Activated CD8-positive, alpha-beta T cell treated with anti-CD3 and anti-CD28 coated beads, Interleukin-2, amount 10 ng/mL, durations not matched to agents 7 days and 5 days (primary cell): ENCODE measurements at regions of chr15 and their contacts with region 1.

Region 1: DNA sequence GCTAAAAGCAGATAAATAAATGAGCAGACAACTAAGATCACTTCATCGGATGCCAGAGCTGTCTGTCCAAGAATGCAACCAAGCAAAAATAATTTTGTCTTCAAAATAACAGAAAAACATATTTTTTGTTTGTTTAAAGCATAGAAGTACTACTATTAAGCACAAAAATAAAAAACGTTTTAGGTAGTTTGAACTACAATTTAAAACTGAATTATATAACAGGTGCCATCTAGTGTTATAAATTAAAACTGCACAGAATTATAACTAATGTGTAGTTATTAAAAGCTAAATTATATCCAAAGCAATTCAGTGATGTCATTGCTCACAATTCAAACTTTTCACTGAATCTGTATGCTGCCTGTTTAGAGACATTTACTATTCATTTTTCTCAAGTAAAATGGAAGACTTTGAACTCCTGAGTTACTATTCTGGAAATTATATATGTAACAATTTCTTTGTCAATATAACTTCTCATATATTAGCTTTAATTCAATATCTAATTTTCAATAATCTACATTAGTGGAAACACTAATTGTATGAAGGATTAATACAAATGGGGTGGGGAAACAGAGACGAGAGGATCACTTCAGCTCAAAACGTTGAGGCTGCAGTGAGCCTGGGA is 29.5 kb downstream of the LINS1 start:
- DNase-seq: no peak
- ATAC-seq: no peak
- H3K4me3 Mint-ChIP-seq: peak overlapping the region; percentile 53
- H3K27ac Mint-ChIP-seq: peak overlapping the region; percentile 82
- H3K4me1 Mint-ChIP-seq: peaks cover 39% of the 10 kb centered on the region
- H3K27me3 Mint-ChIP-seq: no peaks in the 10 kb centered on the region

Region 2: DNA sequence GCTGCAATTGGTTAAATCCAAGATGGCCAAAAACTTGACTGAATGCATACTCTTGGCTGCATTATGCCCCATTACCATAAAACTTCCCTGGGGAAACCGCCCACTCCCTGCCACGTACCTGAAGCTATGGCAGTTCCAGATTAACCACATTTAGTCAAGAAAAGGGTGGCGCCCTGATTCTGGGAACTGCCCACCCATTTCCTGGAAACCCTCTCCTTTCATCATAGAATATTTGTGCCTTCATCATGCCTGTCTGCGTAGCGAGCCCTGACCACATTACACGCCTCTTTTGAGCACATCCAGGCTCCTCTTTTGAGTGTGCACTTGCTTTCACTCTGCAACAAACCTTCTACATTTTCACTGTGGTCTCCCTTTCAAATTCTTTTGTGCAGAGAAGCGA is 24.3 kb after region 1 on chr15:
- CTCF ChIA-PET with region 1: interaction called, 28 read pairs
- POLR2A ChIA-PET with region 1: interaction called, 9 read pairs
- DNase-seq: peak; percentile 98
- ATAC-seq: peak; percentile 87
- H3K4me3 Mint-ChIP-seq: peak overlapping the region; percentile 72
- H3K27ac Mint-ChIP-seq: peak overlapping the region; percentile 99
- H3K4me1 Mint-ChIP-seq: peaks cover 77% of the 10 kb centered on the region
- H3K27me3 Mint-ChIP-seq: no peaks in the 10 kb centered on the region

Region 3: GRCh38 chr15:100602064-100602822 is 29.8 kb after region 1 on chr15 and contains the starts of genes ASB7 and LINS1:
- CTCF ChIA-PET with region 1: interaction called, 28 read pairs
- POLR2A ChIA-PET with region 1: interaction called, 9 read pairs
- DNase-seq: peak; percentile 100
- ATAC-seq: peak; percentile 85
- H3K4me3 Mint-ChIP-seq: no peak within 1 kb of the TSS
- H3K27ac Mint-ChIP-seq: peak within 1 kb of the TSS; percentile 95
- H3K4me1 Mint-ChIP-seq: peaks cover 54% of the 10 kb centered on the region
- H3K27me3 Mint-ChIP-seq: no peaks in the 10 kb centered on the region
- total RNA-seq, gene ASB7: 17.7 to 18.5 TPM
- total RNA-seq, gene LINS1: 40.9 to 45.3 TPM